Naive thymus-derived CD8-positive, alpha-beta T cell (primary cell): ENCODE measurements at regions of chr19 and their contacts with region 1.

Region 1: DNA sequence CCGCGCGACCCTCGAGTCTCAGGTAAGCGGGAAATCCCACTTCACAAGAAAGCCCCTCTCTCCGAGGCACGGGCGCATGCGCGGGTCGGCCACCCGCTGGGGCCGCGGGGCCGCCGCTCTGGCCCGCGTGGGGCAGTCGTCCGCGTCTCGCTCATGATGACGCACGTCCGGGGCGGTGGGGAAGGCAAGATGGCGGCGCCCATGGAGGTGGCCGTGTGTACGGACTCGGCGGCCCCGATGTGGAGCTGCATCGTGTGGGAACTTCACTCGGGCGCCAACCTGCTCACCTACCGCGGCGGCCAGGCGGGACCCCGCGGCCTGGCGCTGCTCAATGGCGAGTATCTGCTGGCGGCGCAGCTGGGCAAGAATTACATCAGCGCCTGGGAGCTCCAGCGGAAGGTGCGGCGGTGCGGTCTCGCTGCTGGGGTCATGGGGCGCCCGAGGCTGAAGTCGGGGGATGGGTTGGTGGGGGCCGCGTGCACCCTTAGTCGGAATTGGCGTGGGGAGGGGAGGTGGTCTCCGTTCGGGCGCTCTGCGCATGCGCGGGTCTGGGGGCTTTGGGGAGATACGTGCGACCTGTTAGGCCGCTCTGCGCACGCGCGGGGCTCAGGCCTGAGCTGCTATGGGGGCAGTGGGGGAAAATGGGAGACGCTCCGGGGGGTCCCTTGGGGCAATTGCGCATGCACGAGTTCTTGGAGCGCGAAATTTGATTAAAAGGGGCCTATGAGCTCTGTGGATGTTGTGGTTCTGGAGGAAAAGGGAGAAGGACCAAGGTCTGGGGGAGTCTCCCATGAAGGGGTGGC is at the start of gene WDR18:
- DNase-seq: peak; percentile 73 to 94 (median 80)
- ATAC-seq: peak; percentile 86 to 89
- H3K4me3 Mint-ChIP-seq: peak within 1 kb of the TSS; percentile 87 to 99 (median 92)
- H3K27ac Mint-ChIP-seq: peak within 1 kb of the TSS; percentile 63 to 96 (median 92)
- H3K4me1 Mint-ChIP-seq: peaks cover 12 to 25% (median 20%) of the 10 kb centered on the region in 4 donors
- H3K27me3 Mint-ChIP-seq: no peaks in the 10 kb centered on the region
- polyA plus RNA-seq, gene WDR18: 51.2 to 72.7 (median 64.1) TPM

Region 2: DNA sequence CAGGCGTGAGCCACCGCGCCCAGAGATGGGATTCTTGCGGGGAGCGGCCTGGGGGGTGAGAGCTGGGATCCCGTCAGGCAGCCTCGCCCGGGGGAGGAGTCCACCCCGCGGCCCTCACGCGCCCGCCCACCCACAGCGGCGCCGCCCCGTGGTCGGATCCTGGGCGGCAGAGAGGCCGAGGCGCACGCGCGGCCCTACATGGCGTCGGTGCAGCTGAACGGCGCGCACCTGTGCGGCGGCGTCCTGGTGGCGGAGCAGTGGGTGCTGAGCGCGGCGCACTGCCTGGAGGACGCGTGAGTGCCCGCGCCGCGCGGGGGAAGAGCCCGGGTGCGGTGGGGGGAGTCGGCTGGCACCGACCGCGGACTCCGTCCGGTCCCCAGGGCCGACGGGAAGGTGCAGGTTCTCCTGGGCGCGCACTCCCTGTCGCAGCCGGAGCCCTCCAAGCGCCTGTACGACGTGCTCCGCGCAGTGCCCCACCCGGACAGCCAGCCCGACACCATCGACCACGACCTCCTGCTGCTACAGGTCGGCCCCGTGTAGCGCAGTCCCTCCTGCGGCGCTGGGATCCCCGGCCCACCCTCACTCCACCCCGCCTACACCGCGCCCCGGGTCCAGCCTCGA is 123.8 kb before region 1 on chr19:
- POLR2A ChIA-PET with region 1: interaction called, 15 read pairs
- DNase-seq: peak in 9 of 10 donors; percentile 39 to 74 (median 59)
- ATAC-seq: peak; percentile 56 to 59
- H3K4me3 Mint-ChIP-seq: peak overlapping the region in 6 of 10 donors; percentile 28 to 60 (median 49)
- H3K27ac Mint-ChIP-seq: no peak overlapping the region
- H3K4me1 Mint-ChIP-seq: peaks cover 7 to 28% (median 17%) of the 10 kb centered on the region in 4 donors
- H3K27me3 Mint-ChIP-seq: peaks cover 0 to 11% (median 0%) of the 10 kb centered on the region in 5 donors

Region 3: GRCh38 chr19:925526-926322 is 58.6 kb before region 1 on chr19 and contains the start of gene ARID3A:
- POLR2A ChIA-PET with region 1: interaction called, 101 read pairs
- DNase-seq: peak; percentile 46 to 86 (median 70)
- ATAC-seq: peak; percentile 60 to 76
- H3K4me3 Mint-ChIP-seq: peak within 1 kb of the TSS; percentile 67 to 87 (median 78)
- H3K27ac Mint-ChIP-seq: peak within 1 kb of the TSS in 8 of 10 donors; percentile 22 to 83 (median 58)
- H3K4me1 Mint-ChIP-seq: peaks cover 7 to 30% (median 17%) of the 10 kb centered on the region in 4 donors
- H3K27me3 Mint-ChIP-seq: no peaks in the 10 kb centered on the region
- polyA plus RNA-seq, gene ARID3A: 0.09 to 0.58 (median 0.16) TPM

Region 4: GRCh38 chr19:958967-959820 is 25.2 kb before region 1 on chr19:
- POLR2A ChIA-PET with region 1: no interaction called
- DNase-seq: no peak
- ATAC-seq: no peak
- H3K4me3 Mint-ChIP-seq: peak overlapping the region in 1 of 10 donors; percentile 45
- H3K27ac Mint-ChIP-seq: peak overlapping the region in 2 of 10 donors; percentile 5 to 66
- H3K4me1 Mint-ChIP-seq: peaks cover 0 to 2% (median 0%) of the 10 kb centered on the region in 4 donors
- H3K27me3 Mint-ChIP-seq: no peaks in the 10 kb centered on the region

Region 5: DNA sequence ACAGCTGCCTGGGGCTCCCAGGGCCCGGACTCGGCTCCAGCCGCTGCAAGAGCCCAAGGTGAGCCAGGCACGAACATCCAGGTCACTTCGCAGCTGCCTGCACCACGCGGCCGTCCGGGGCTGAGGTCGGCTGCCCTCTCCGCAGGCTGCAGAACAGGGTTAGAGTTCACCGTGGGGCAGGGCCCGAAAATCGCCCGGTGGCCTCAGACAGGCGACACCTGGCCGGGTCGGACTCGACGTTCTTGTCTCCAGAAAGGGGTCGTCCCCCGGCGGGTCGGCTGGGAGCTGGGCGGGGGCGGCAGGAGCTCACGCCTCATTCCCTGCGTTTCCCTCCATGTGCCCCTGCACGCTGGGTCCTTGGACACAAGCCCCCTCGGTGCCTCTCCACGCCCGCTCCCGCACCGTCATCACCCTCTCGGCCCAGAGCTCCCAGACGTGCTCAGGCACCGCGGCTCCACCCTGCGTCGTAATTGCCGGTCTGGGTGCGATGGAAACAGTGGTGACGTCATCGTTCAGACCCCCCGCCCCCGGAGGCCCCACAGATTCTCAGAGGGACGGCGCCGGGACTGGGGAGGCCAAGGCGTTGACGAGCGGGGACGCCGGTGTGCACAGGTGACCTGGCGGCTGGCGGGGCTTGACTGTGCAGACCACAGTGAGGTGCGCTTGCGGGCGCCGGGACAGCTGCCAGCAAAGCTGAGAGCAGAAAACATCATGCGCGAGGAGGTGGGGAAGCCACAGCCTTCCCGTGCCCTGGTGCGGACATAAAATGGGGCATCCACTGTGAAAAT is 11.9 kb after region 1 on chr19:
- POLR2A ChIA-PET with region 1: interaction called, 42 read pairs
- DNase-seq: peak; percentile 55 to 94 (median 86)
- ATAC-seq: peak; percentile 84 to 87
- H3K4me3 Mint-ChIP-seq: peak overlapping the region; percentile 61 to 87 (median 80)
- H3K27ac Mint-ChIP-seq: peak overlapping the region; percentile 51 to 96 (median 94)
- H3K4me1 Mint-ChIP-seq: peaks cover 6 to 20% (median 19%) of the 10 kb centered on the region in 4 donors
- H3K27me3 Mint-ChIP-seq: peaks cover 5 to 30% (median 11%) of the 10 kb centered on the region in 5 donors

Region 6: DNA sequence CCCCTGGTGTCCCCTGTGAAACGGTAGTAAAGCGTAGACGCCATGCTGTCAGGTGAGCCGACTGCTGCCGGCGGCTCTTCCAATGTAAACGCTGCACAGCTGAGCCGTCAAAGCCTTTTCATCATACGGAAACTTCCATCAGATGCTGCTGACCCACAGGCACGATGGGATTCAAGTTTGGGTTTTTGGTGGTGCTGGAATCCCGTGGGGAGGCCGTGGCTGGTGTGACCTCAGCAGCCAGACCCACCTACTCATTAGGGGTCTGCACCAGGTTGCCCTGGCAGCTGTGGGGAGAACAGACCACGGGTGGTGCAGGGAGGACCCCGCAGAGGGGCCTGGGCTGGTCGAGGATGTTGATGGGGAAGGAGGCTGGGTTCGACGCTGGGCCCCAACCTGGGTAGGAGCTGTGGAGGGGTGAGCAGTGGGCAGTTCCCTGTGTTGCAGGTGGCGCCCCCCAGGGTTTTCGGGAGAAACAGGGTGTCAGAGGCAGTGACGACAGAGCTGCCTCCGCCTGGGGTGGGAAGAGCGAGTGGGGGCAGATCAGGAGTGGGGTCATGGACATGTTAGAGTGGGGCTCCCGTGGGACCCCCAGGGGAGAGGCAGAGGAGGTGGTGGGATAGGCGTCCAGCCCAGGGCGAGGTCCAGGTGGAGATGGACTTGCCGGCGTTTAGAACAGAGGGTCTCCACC is 22.5 kb after region 1 on chr19:
- POLR2A ChIA-PET with region 1: no interaction called
- DNase-seq: no peak
- ATAC-seq: no peak
- H3K4me3 Mint-ChIP-seq: no peak overlapping the region
- H3K27ac Mint-ChIP-seq: peak overlapping the region in 5 of 10 donors; percentile 44 to 78 (median 58)
- H3K4me1 Mint-ChIP-seq: peaks cover 2 to 8% (median 5%) of the 10 kb centered on the region in 4 donors
- H3K27me3 Mint-ChIP-seq: peaks cover 0 to 3% (median 0%) of the 10 kb centered on the region in 5 donors

Region 7: DNA sequence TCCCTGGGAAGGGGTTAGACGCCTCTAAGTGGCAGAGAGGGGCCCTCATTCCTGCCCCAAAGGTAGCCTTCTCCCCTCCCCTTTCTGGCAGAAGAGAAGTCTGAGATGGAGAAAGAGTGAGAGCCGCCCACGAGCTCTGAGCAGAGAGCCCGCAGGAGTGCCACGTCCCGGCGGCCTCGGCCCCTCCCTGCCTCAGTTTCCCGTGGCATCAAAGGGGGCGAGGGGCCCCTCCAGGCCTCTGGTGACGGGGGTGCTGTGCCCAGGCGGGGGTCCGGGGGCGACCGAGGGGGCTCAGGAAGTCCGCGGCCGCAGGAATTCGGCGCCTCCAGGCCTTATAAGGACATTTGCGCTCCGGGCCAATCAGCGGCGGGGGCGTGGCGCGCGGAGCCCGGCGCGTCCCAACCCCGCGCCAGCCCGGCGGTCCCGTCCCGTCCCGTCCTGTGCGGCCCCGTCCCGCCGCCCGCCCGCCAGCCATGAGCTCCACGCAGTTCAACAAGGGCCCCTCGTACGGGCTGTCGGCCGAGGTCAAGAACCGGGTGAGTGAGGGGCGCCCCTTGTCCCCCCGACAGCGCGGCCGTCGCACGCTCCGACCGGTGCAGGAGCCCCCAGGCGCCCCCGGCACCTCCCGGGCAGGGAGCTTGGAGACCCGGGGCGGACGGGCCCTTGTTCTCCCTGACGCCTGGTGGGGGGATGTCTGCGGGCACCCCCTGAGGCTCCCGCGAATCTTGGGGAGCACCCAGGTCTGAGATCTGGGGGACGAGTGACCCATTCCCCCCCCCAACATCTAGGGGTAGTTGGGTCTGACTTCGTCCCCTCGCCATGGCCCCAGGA is 42.0 kb after region 1 on chr19 and contains the start of gene CNN2:
- POLR2A ChIA-PET with region 1: interaction called, 23 read pairs
- DNase-seq: peak in 8 of 10 donors; percentile 46 to 71 (median 56)
- ATAC-seq: peak; percentile 13 to 34
- H3K4me3 Mint-ChIP-seq: peak within 1 kb of the TSS; percentile 94 to 99 (median 98)
- H3K27ac Mint-ChIP-seq: peak within 1 kb of the TSS; percentile 89 to 98 (median 96)
- H3K4me1 Mint-ChIP-seq: peaks cover 13 to 35% (median 27%) of the 10 kb centered on the region in 4 donors
- H3K27me3 Mint-ChIP-seq: peaks cover 0 to 2% (median 0%) of the 10 kb centered on the region in 5 donors
- polyA plus RNA-seq, gene CNN2: 498 to 693 (median 515) TPM

Region 8: DNA sequence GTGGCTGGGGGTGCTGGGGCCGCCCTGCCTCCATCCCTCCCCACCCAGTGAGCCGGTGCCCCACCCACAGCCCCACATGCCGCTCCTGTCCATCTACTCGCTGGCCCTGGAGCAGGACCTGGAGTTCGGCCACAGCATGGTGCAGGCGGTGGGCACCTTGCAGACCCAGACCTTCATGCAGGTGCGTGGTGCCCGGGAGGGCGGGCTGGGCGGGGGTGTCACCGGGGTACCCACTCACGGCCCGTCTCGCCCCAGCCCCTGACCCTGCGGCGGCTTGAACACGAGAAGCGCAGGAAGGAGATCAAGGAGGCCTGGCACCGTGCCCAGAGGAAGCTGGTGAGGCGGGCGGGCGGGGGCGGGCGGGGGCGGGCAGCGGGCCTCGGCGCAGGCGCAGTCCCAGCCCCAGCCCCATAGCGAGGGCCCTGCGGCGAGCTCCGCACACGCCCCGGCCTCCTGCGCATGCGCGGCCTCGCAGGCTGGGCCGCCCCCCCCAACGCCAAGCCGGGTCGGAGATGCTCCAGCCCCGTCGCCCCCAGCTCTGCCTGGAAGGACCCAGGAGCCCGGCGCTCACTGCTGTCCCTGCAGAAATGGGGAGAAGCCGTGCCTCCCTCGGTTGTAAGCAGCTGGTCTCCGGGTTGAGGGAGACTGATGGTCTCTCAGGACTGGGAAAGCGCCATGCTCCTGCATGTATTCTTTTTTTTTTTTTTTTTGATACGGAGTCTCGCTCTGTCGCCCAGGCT is 90.3 kb after region 1 on chr19:
- POLR2A ChIA-PET with region 1: interaction called, 16 read pairs
- DNase-seq: peak; percentile 91 to 100 (median 95)
- ATAC-seq: peak; percentile 37 to 42
- H3K4me3 Mint-ChIP-seq: peak overlapping the region; percentile 77 to 96 (median 86)
- H3K27ac Mint-ChIP-seq: peak overlapping the region; percentile 97 to 100 (median 99)
- H3K4me1 Mint-ChIP-seq: peaks cover 23 to 63% (median 51%) of the 10 kb centered on the region in 4 donors
- H3K27me3 Mint-ChIP-seq: peaks cover 0 to 4% (median 0%) of the 10 kb centered on the region in 5 donors

Region 9: DNA sequence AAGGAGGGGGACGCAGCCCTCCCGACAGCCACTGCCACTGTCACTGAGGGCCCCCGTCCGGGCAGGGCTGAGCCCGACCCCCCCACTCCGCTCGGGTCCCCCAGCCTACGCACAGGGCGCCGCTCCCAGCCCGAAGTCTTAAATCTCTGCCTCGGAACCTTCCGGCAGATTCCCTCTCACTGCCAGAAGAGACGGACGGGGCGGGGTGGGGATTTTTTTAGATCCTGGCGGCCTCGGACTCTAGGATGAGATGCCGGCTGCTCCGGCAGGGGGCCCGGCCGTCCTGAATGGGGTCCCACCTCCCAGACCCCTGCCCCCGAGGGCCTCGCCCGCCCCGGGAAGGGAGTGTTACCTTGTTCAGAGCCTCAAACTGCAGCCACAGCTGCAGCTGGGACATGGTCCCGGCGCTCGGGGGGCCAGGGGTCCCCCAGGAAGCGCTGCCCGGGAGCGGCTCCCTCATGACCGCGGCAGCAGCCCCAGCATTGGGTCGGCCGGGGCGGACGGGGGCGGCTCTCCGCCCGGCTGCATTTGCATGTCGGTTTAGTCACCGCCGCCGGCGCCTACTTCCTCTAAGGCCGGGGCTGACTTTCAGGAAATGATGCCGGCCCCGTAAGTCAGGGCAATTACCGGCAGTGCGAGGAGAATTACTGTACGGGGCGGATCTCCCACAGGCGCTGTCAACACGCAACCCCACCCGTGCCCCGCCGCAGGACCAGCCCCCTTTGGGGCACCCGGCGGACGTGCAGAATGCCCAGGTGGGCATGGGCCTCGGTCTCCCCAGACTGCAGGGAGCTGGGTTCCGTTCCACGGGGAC is 147.6 kb after region 1 on chr19:
- POLR2A ChIA-PET with region 1: no interaction called
- DNase-seq: peak; percentile 63 to 91 (median 79)
- ATAC-seq: peak; percentile 78 to 81
- H3K4me3 Mint-ChIP-seq: peak overlapping the region; percentile 75 to 86 (median 83)
- H3K27ac Mint-ChIP-seq: peak overlapping the region; percentile 80 to 95 (median 92)
- H3K4me1 Mint-ChIP-seq: peaks cover 13 to 51% (median 39%) of the 10 kb centered on the region in 4 donors
- H3K27me3 Mint-ChIP-seq: no peaks in the 10 kb centered on the region